Sigmoid colon (tissue), 7 donors: ENCODE measurements at regions of chr19 and their contacts with region 1.

Region 1: GRCh38 chr19:16628183-16628983 is at the start of gene MED26:
- DNase-seq: peak; percentile 97
- H3K4me3 ChIP-seq: peak within 1 kb of the TSS; percentile 66 to 99 (median 95)
- H3K27ac ChIP-seq: peak within 1 kb of the TSS; percentile 92 to 99 (median 96)
- H3K4me1 ChIP-seq: peaks cover 0 to 42% (median 33%) of the 10 kb centered on the region in 4 donors
- H3K27me3 ChIP-seq: no peaks in the 10 kb centered on the region
- CTCF ChIP-seq: no peak
- EP300 ChIP-seq: peak in 1 of 4 donors; percentile 36
- POLR2A ChIP-seq: peak; percentile 36 to 74
- total RNA-seq, gene MED26: 5.3 to 6.5 (median 5.9) TPM

Region 2: DNA sequence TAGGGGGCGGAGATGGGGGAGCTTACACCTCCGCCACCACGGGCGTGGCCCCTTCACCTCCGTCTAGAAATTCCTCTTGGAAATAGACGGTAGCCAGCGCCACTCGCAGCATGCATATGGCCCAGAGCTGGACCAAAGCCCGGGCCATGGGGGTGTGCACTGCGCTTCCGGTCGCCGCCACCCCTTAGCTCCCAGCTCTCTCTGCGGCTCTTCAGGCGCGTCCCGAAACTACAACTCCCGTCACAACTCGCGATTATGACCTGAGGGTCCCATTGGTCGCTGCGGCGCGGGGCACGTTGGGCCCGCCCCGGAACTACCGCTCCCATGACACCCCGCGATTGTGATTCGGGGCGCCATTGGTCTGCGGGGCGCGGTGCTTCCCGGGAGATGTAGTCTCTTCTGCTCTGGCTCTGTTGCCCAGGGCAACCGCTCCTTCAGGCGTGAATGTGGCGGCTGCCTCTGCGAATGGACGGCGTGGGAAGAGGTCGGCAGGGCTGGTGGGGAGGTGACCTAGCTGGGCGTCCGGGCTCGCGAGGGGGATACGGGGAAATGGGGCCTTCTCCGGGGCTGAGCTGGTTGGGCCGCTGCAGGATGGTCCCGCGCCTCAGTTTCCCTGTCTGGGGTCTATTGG is 132.3 kb before region 1 on chr19 and contains the starts of genes C19orf44 and CALR3:
- intact Hi-C with region 1: loop called (anchors 1 kb)
- DNase-seq: peak; percentile 99
- H3K4me3 ChIP-seq: peak within 1 kb of the TSS; percentile 72 to 75 (median 74)
- H3K27ac ChIP-seq: peak within 1 kb of the TSS; percentile 82 to 89 (median 86)
- H3K4me1 ChIP-seq: peaks cover 0 to 13% (median 11%) of the 10 kb centered on the region in 4 donors
- H3K27me3 ChIP-seq: no peaks in the 10 kb centered on the region
- CTCF ChIP-seq: peak in 2 of 4 experiments; percentile 12 to 20
- EP300 ChIP-seq: peak in 1 of 4 donors; percentile 4
- POLR2A ChIP-seq: no peak
- total RNA-seq, gene C19orf44: 3.8 to 10.0 (median 5.7) TPM
- total RNA-seq, gene CALR3: not detected

Region 3: DNA sequence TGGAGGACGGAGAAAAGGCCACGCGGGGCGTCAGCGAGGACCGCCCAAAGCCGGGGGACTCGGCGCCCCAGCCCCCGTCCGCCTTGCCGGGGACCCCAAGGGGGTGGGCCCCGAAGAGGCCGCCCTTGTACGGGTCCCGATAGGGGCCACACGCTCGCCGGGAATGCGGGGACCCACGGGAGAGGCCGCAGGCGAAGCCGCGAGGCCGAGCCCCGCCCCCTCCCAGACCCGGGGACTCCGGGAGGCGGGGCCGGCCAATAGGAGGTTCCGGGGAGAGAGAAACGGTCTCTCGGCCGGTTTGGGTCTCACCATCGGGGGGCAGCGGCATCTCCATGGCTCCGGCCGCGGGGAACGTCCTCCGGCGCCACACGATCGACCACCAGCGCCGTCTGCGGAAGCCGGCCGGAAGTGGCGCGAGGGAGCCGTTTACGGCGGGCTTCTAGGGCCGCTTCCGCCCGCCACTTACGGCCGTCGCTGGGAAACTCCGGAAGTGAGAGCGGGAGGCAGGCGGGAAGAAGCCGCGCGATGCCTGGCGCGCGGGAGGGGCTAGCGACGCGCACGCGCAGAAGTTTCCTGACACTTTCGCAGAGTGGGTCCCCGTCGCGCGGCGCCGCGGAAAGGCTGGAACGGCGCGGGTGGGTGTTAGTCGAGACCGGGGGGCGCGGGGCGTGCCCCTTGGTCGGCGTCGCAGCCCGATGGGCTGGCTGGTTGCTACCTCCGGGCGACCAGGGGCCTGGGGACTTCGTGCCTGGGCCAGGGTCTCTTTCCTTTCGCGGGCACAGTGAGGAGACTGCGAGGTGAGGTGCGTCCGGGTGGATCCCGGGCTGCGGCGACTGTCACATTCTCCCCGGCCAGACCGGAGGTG is 86.1 kb before region 1 on chr19 and contains the start of gene CHERP:
- intact Hi-C with region 1: loop called (anchors 2 kb)
- DNase-seq: peak; percentile 96
- H3K4me3 ChIP-seq: peak within 1 kb of the TSS; percentile 75 to 86 (median 78)
- H3K27ac ChIP-seq: peak within 1 kb of the TSS; percentile 86 to 93 (median 88)
- H3K4me1 ChIP-seq: peaks cover 0 to 63% (median 49%) of the 10 kb centered on the region in 4 donors
- H3K27me3 ChIP-seq: no peaks in the 10 kb centered on the region
- CTCF ChIP-seq: no peak
- EP300 ChIP-seq: peak in 1 of 4 donors; percentile 70
- POLR2A ChIP-seq: peak; percentile 70 to 79
- total RNA-seq, gene CHERP: 5.6 to 8.6 (median 6.6) TPM

Region 4: GRCh38 chr19:16572332-16573211 is 55.8 kb before region 1 on chr19 and contains the start of gene SLC35E1:
- intact Hi-C with region 1: loop called (anchors 1 kb)
- DNase-seq: peak; percentile 98
- H3K4me3 ChIP-seq: peak within 1 kb of the TSS; percentile 69 to 97 (median 92)
- H3K27ac ChIP-seq: peak within 1 kb of the TSS; percentile 83 to 92 (median 89)
- H3K4me1 ChIP-seq: peaks cover 0 to 44% (median 37%) of the 10 kb centered on the region in 4 donors
- H3K27me3 ChIP-seq: no peaks in the 10 kb centered on the region
- CTCF ChIP-seq: no peak
- EP300 ChIP-seq: peak in 1 of 4 donors; percentile 79
- POLR2A ChIP-seq: peak; percentile 80
- total RNA-seq, gene SLC35E1: 20.3 to 27.4 (median 23.1) TPM

Region 5: DNA sequence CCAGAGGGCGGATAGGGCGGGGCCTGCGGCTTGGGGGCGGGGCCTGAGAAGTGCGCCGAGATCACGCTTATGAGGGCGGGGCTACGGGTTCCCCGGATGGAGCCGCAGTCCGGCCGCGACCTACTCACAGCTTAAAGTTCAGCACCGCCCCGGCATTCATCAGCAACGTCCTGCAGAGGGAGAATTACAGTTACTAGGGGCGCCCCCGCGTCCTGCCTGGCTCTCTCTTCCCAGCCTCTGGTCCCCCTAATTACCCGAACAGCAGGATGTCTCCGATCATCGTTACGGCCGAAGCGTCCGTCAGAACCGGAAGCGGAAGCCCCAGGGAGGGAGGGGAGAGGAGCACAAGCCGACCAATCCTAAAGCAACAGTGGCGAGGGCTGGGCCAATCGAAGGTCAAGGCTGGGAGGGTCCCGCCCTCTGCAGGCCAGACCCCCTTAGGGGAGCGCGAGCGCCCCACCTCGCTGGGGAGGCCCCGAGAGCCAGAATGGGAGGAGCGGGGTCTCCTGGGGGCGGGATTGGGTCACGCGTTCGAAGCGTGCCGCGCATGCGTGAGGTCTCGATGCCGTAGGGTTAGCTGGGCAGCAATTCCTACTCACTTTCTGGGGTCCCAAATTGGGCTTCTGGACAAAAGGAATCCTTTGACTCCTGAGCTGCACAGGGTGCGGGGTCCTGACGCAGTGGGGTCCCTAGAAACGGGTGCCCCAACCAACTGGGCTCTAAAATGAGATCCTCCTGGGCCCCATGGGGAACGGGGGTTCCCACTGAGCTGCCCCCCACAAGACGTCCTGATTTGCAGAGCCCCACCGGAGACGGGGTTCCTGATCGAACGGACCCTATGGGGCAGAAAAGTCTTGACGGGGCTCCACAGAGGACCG is 31.7 kb after region 1 on chr19 and contains the start of gene SMIM7:
- intact Hi-C with region 1: loop called (anchors 1 kb)
- DNase-seq: peak; percentile 99
- H3K4me3 ChIP-seq: peak within 1 kb of the TSS; percentile 70 to 84 (median 80)
- H3K27ac ChIP-seq: peak within 1 kb of the TSS; percentile 91 to 94 (median 94)
- H3K4me1 ChIP-seq: peaks cover 0 to 42% (median 33%) of the 10 kb centered on the region in 4 donors
- H3K27me3 ChIP-seq: no peaks in the 10 kb centered on the region
- CTCF ChIP-seq: no peak
- EP300 ChIP-seq: peak in 1 of 4 donors; percentile 39
- POLR2A ChIP-seq: peak; percentile 89 to 95
- total RNA-seq, gene SMIM7: 65.2 to 110 (median 86.2) TPM

Region 6: DNA sequence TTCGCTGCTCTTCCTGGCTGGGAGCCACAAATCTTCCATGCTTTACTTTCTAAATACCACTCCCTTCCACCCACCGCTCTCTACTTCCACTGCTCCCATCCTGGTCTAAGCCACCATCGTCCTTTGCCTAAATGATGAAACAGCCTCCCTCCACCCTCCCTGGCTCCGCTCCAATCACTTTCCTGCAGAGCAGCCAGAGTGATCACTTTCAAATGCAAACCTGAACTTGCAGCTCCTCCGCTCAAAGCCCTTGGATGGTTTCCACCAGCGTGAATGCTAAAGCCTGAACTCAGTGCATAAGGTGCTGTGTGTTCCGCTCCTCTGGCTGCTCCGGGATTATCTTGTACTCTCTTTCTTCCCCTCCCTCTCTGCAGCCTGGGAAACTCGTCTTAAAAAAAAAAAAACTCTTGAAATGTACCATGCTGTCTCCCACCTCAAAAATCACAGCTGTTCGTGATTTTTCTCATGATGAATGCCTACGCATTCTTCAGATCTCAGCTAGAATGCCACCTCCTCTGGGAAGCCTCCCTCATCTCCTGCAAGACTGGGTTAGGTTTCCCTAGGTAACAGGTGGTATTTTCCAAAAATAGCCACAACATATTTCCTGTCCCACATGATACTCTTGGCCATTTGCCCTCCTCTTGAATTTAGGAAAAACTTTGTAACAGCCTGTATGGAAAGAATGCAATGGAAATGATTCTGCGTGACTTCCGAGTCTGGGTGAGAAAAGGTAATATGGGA is 197.1 kb after region 1 on chr19:
- intact Hi-C with region 1: no loop called
- DNase-seq: peak; percentile 85
- H3K4me3 ChIP-seq: peak overlapping the region; percentile 27 to 53 (median 42)
- H3K27ac ChIP-seq: peak overlapping the region; percentile 64 to 81 (median 72)
- H3K4me1 ChIP-seq: peaks cover 0 to 28% (median 24%) of the 10 kb centered on the region in 4 donors
- H3K27me3 ChIP-seq: no peaks in the 10 kb centered on the region
- CTCF ChIP-seq: no peak
- EP300 ChIP-seq: no peak
- POLR2A ChIP-seq: no peak